ENCODE measurements at regions of chr11 and their contacts with region 1.

Region 1: GRCh38 chr11:43830928-43831440 is 49.6 kb upstream of the ALKBH3 start:
- DNase-seq: peak; percentile 81
- ATAC-seq: peak; percentile 99
- H3K4me3 Mint-ChIP-seq: no peak overlapping the region
- H3K27ac Mint-ChIP-seq: peak overlapping the region; percentile 73
- H3K4me1 Mint-ChIP-seq: peaks cover 24% of the 10 kb centered on the region
- H3K27me3 Mint-ChIP-seq: no peaks in the 10 kb centered on the region

Region 2: GRCh38 chr11:43868852-43869567 is 38.0 kb after region 1 on chr11:
- CTCF ChIA-PET with region 1: interaction called, 6 read pairs
- POLR2A ChIA-PET with region 1: no interaction called
- intact Hi-C with region 1: loop called (anchors 1 kb)
- DNase-seq: peak; percentile 58
- ATAC-seq: peak; percentile 97
- H3K4me3 Mint-ChIP-seq: peak overlapping the region; percentile 7
- H3K27ac Mint-ChIP-seq: peak overlapping the region; percentile 8
- H3K4me1 Mint-ChIP-seq: peaks cover 21% of the 10 kb centered on the region
- H3K27me3 Mint-ChIP-seq: peaks cover 45% of the 10 kb centered on the region

Region 3: DNA sequence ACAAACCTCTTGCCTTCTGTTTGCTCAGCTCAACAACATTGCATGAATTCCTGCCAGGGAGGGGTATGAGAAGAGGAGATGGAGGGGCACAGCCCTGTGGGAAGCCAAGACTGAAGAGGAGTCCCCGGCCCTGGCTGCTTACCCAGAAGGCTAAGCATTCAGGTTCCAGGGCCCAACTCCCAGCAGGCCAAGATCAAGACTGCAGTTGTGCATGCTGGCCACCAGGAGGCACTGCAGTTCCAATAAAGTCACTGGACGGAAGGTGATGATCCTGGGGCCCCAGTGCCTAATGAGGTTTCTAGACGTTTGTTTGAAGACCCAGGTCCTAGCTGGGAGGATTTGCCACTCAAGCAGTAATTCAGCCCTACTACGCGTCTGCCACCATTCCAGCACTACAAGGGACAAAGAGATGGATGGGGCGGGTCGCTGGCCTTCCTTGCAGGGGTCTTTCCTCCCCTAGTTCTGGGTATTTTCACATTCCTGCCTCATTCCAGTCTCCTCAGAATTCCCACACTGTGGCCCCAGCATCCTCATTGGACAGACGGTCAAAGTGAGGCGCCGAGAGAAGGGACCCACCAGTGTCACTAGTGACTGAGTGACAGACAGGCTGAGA is 455.4 kb after region 1 on chr11:
- CTCF ChIA-PET with region 1: no interaction called
- POLR2A ChIA-PET with region 1: no interaction called
- intact Hi-C with region 1: no loop called
- DNase-seq: peak; percentile 80
- ATAC-seq: peak; percentile 85
- H3K4me3 Mint-ChIP-seq: no peak overlapping the region
- H3K27ac Mint-ChIP-seq: no peak overlapping the region
- H3K4me1 Mint-ChIP-seq: no peaks in the 10 kb centered on the region
- H3K27me3 Mint-ChIP-seq: peaks cover 2% of the 10 kb centered on the region

Measured in activated CD4-positive, alpha-beta T cell treated with anti-CD3 and anti-CD28 coated beads for 36 hours (primary cell).